Breast epithelium (tissue), 4 donors: ENCODE measurements at regions of chr1 and their contacts with region 1.

Region 1: GRCh38 chr1:117271571-117272358 is 61.0 kb upstream of the VTCN1 start:
- DNase-seq: no peak
- H3K4me3 ChIP-seq: no peak overlapping the region
- H3K27ac ChIP-seq: peak overlapping the region in 1 of 2 donors; percentile 56
- H3K4me1 ChIP-seq: no peaks in the 10 kb centered on the region
- H3K27me3 ChIP-seq: no peaks in the 10 kb centered on the region
- CTCF ChIP-seq: no peak
- POLR2A ChIP-seq: no peak

Region 2: DNA sequence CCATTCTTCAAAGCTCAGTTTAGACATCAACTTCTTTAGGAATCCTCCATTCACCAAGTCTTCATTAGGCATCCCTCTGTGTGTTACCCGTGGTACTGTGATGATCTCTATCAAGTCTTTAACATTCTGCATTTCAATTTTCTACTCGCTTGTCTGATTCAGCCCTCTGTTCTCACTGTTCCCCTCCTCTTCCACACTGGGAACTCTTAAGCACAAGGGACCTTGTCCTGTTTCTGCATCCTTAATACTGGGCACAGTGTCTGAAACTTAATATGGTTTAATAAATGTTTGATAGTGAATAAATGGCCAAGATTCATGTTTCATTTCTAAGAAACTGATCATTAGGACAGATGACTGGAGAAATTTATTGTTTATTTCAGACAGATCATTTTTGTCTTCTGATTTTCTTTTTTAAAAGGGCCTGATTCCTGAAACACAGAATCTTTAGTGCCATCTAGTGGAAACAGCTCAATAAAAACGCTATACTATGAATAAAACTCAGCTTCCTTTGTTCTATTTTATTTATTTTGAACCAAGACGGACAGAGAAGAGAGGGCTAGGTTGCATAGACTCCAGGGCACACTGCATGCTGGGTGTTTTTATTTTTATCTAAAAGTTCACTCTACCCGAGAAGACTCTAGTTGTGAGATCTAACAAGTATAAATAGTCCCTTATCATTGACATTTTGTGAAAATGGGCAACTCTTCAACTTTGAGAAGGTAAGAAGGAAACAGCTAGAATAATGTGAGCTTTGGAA is 143.3 kb before region 1 on chr1:
- intact Hi-C with region 1: loop called (anchors 5 kb)
- DNase-seq: no peak
- H3K4me3 ChIP-seq: no peak overlapping the region
- H3K27ac ChIP-seq: no peak overlapping the region
- H3K4me1 ChIP-seq: no peaks in the 10 kb centered on the region
- H3K27me3 ChIP-seq: no peaks in the 10 kb centered on the region
- CTCF ChIP-seq: peak in 2 of 3 donors; percentile 35 to 39
- POLR2A ChIP-seq: no peak

Region 3: GRCh38 chr1:117209094-117209493 is 62.7 kb before region 1 on chr1:
- intact Hi-C with region 1: no loop called
- DNase-seq: no peak
- H3K4me3 ChIP-seq: peak overlapping the region in 2 of 3 donors; percentile 45 to 65
- H3K27ac ChIP-seq: peak overlapping the region; percentile 92 to 93
- H3K4me1 ChIP-seq: no peaks in the 10 kb centered on the region
- H3K27me3 ChIP-seq: no peaks in the 10 kb centered on the region
- CTCF ChIP-seq: no peak
- POLR2A ChIP-seq: no peak

Region 4: DNA sequence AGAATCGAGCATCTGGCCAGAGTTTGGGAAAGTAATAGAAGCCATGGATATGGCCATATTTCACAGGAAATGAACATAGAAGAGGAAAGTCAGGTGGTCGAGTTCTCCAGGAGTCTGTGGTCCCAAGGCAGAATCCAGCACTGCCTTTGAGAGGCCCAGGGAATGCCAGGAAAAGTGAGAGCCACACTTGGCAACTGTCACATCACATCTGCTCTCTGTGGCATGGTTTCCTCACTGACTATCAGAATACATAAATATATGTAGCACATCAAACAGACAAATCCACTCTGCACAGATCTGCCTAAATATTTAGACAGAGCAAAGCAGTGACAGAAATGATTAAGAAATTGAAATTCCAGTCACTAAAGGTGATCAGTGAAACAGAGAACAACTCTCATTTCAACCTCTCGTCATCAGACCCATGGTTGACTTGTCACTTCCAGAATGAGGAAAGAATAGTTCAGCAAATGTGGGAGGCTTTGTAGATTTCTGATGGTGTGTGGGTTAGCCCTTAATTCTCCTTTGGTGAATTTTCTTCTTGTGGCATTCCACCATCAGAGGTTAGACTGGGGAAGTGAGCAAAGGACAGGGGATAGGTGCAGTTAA is 36.6 kb after region 1 on chr1:
- intact Hi-C with region 1: no loop called
- DNase-seq: no peak
- H3K4me3 ChIP-seq: no peak overlapping the region
- H3K27ac ChIP-seq: no peak overlapping the region
- H3K4me1 ChIP-seq: no peaks in the 10 kb centered on the region
- H3K27me3 ChIP-seq: no peaks in the 10 kb centered on the region
- CTCF ChIP-seq: no peak
- POLR2A ChIP-seq: no peak

Region 5: GRCh38 chr1:117473063-117473462 is 201.3 kb after region 1 on chr1:
- intact Hi-C with region 1: no loop called
- DNase-seq: no peak
- H3K4me3 ChIP-seq: no peak overlapping the region
- H3K27ac ChIP-seq: no peak overlapping the region
- H3K4me1 ChIP-seq: no peaks in the 10 kb centered on the region
- H3K27me3 ChIP-seq: no peaks in the 10 kb centered on the region
- CTCF ChIP-seq: no peak
- POLR2A ChIP-seq: no peak